BJ (cell line): ENCODE measurements at regions of chrX and their contacts with region 1.

Region 1: DNA sequence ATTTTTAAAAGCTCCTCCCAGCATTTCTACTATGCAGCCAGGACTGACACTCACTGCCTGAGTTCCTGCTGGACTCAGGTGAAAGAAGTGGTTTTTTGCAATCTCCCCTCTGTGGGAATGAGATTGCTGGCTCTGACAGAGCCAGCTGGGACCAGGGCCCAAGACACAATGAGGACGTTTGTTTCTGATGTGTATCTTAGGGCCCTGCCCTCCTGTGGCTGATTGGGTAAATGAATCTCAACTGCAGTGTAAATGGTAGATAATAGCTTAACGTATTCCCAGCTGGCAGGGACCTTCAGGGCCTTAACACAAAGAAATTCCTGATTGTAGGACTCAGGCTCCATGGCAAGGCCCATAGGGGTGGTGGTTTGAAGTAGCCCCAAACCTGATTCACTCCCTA is 85.8 kb upstream of the PRPS1 start:
- DNase-seq: no peak
- H3K4me3 ChIP-seq: no peak overlapping the region
- H3K27me3 ChIP-seq: no peaks in the 10 kb centered on the region
- CTCF ChIP-seq: no peak

Region 2: DNA sequence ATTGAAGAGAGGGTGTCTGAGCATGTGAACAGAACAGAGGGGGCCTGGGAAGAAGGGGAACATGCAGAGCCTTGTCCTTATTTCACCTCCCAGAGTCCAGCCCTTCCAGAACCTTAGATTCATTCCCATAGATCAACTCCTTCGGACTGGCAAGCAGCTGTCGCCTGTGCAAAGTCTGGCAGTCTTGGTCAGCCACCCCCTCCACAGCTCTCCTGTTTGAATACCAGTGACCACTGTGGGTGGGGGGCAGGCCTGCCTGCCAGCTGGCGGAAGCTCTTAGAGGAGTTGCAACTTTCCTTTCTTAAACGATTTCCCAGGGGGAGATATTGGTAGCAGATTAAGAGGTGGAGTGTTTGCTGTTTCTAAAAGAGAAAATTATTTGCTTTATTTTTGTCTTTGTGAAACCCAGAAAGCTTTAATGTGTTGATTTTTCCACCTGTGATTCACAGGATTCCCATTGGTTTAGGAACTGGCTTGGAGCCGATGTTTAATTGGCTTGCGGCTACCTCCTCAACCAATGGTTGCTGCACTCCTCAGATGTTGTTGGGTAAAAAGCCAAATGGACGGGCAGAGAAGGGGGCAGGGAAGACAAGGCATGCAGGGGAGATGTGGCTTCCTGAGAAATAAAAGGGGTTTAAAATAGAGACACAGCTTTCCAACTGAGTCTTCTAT is 23.6 kb after region 1 on chrX:
- CTCF ChIA-PET with region 1: no interaction called
- POLR2A ChIA-PET with region 1: no interaction called
- DNase-seq: no peak
- H3K4me3 ChIP-seq: no peak overlapping the region
- H3K27me3 ChIP-seq: no peaks in the 10 kb centered on the region
- CTCF ChIP-seq: no peak

Region 3: GRCh38 chrX:107776649-107777535 is 234.4 kb after region 1 on chrX:
- CTCF ChIA-PET with region 1: interaction called, 13 read pairs
- POLR2A ChIA-PET with region 1: no interaction called
- DNase-seq: peak; percentile 31
- H3K4me3 ChIP-seq: peak overlapping the region; percentile 42
- H3K27me3 ChIP-seq: peaks cover 4% of the 10 kb centered on the region; the same call in 1 of the 2 replicates
- CTCF ChIP-seq: peak; percentile 59